ENCODE measurements at regions of chr2 and their contacts with region 1.

Region 1: GRCh38 chr2:105388971-105389381 is 9.9 kb downstream of the FHL2 start:
- DNase-seq: no peak
- ATAC-seq: no peak
- H3K4me3 ChIP-seq: no peak overlapping the region
- H3K27ac ChIP-seq: no peak overlapping the region; a peak in 1 of 6 replicates
- H3K4me1 ChIP-seq: peaks cover 51% of the 10 kb centered on the region
- CTCF ChIP-seq: no peak
- EP300 ChIP-seq: no peak
- POLR2A ChIP-seq: no peak
- RAD21 ChIP-seq: no peak

Region 2: GRCh38 chr2:105403785-105404698 is 15.1 kb after region 1 on chr2:
- CTCF ChIA-PET with region 1: interaction called, 14 read pairs
- POLR2A ChIA-PET with region 1: interaction called, 3 read pairs
- DNase-seq: peak; percentile 36 to 67
- ATAC-seq: peak; percentile 69 to 71
- H3K4me3 ChIP-seq: no peak overlapping the region
- H3K27ac ChIP-seq: peak overlapping the region; percentile 55 to 84
- H3K4me1 ChIP-seq: peaks cover 28% of the 10 kb centered on the region
- CTCF ChIP-seq: peak; percentile 37
- EP300 ChIP-seq: 0 out of 5 replicates have a peak, but pooled peaks of 1 of the 2 experiments have one; percentile 17
- POLR2A ChIP-seq: no peak
- RAD21 ChIP-seq: peak; percentile 8 to 39; a peak in 2 of 5 replicates